ENCODE measurements at regions of chr7 and their contacts with region 1.

Region 1: GRCh38 chr7:33932832-33933468 is 27.6 kb downstream of the BMPER start:
- DNase-seq: peak; percentile 91
- H3K4me3 ChIP-seq: peak overlapping the region; percentile 3 to 32 (median 28)
- H3K27ac ChIP-seq: peak overlapping the region in 1 of 4 donors; percentile 40
- H3K4me1 ChIP-seq: peaks cover 0 to 20% (median 11%) of the 10 kb centered on the region in 4 donors
- H3K27me3 ChIP-seq: no peaks in the 10 kb centered on the region
- CTCF ChIP-seq: peak; percentile 70 to 94 (median 88)
- EP300 ChIP-seq: no peak
- POLR2A ChIP-seq: no peak

Region 2: GRCh38 chr7:33185786-33186185 is 747.2 kb before region 1 on chr7:
- intact Hi-C with region 1: loop called (anchors 2 kb)
- DNase-seq: no peak
- H3K4me3 ChIP-seq: no peak overlapping the region
- H3K27ac ChIP-seq: no peak overlapping the region
- H3K4me1 ChIP-seq: peaks cover 0 to 15% (median 4%) of the 10 kb centered on the region in 4 donors
- H3K27me3 ChIP-seq: no peaks in the 10 kb centered on the region
- CTCF ChIP-seq: peak in 3 of 4 experiments; percentile 23 to 55 (median 43)
- EP300 ChIP-seq: no peak
- POLR2A ChIP-seq: no peak

Region 3: DNA sequence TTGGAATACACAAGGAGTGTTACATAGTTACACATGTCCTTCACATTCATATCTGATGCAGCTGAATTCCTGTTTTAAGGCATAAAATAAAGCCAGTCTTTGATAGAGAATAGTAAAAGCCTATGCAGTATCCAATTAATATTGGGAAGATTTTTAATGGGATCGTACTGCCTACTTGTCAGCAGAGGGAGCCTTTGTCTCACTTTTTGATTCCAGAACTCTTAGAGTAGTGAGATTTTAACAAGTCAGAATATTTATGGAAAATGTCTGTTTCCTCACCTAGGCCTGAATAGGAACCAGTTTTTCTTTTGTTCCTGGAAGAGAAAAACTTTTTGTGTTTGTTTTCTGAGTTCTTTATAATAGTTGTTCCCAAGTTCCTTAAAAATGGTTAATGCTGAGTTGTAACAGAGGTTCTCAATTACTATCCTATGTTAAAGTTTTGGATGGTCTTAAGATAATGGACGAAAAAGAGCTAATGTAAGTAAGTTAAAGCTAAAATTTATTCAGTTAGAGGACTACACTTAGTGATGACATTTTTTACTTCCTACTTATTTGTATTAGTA is 689.5 kb before region 1 on chr7:
- intact Hi-C with region 1: loop called (anchors 10 kb)
- DNase-seq: no peak
- H3K4me3 ChIP-seq: no peak overlapping the region
- H3K27ac ChIP-seq: no peak overlapping the region
- H3K4me1 ChIP-seq: peaks cover 0 to 10% (median 6%) of the 10 kb centered on the region in 4 donors
- H3K27me3 ChIP-seq: no peaks in the 10 kb centered on the region
- CTCF ChIP-seq: peak; percentile 39 to 75 (median 62)
- EP300 ChIP-seq: no peak
- POLR2A ChIP-seq: no peak

Region 4: DNA sequence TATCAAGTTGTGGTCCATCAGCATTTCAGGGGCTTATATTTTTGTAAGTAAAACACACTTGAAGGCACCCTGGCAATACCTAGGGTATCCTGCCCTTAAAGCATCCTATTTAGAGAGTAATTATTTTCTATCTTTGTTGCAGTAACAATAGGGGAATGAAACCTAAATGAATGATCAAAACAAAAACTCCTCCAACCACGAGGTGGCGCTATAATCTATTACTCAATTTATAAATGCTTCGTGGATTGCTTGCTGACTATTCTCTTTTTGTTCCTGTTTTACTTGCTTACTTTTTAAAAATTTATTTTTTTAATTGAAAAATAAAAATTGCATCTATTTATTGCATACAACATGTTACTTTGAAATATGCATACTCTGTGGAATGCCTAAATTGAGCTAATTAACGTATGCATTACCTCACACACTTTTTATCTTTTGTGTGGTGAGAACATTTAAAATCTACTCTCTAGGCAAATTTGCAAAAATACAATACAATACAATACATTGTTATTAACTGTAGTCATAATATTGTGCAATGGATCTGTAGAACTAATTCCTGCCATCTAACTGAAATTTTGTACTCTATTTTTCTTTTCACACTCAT is 175.3 kb before region 1 on chr7:
- intact Hi-C with region 1: loop called (anchors 2 kb)
- DNase-seq: no peak
- H3K4me3 ChIP-seq: no peak overlapping the region
- H3K27ac ChIP-seq: no peak overlapping the region
- H3K4me1 ChIP-seq: peaks cover 0 to 8% (median 7%) of the 10 kb centered on the region in 4 donors
- H3K27me3 ChIP-seq: no peaks in the 10 kb centered on the region
- CTCF ChIP-seq: peak in 3 of 4 experiments; percentile 41 to 76 (median 69)
- EP300 ChIP-seq: no peak
- POLR2A ChIP-seq: no peak

Region 5: DNA sequence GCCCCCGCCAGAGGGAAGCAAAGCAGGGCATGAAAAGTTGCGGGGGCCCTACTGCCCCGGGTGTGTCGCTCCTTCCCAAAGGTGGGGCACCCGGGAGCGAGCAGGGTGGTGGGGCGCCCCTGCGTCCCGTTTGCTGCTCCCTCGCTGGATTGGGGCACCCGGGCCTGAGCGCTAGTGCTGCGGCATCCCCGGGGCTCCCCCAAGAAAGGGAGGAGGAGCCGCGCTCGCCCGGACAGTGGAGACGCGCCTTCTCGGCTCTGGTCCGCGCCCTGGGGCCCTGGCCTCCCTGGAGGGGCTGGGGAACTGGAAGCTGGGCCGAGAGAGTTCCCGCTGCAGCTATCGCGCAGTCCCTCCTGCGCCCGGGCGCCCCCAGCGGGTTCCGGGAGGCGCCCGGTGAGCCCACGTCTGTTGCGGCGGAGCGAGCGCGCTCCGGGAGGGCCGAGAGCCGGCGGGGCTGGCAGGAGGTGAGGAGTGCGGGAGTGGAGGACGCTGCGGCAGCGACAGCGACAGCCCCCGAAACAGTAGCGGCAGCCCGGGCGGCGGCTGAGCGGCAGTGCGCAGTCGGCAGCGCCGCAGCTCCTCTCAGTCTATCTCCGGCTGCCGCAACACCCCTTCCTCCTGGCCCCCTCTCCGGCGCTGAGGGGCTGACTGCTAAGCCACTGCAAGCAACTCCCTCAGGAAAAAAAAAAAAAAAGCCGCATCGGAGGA is 28.1 kb before region 1 on chr7:
- intact Hi-C with region 1: loop called (anchors 2 kb)
- DNase-seq: peak; percentile 68
- H3K4me3 ChIP-seq: peak overlapping the region; percentile 57 to 74 (median 65)
- H3K27ac ChIP-seq: peak overlapping the region; percentile 54 to 70 (median 64)
- H3K4me1 ChIP-seq: peaks cover 0 to 20% (median 13%) of the 10 kb centered on the region in 4 donors
- H3K27me3 ChIP-seq: peaks cover 0 to 4% (median 0%) of the 10 kb centered on the region in 3 donors
- CTCF ChIP-seq: no peak
- EP300 ChIP-seq: no peak
- POLR2A ChIP-seq: no peak

Measured in sigmoid colon (tissue), 7 donors.